ENCODE measurements at regions of chr5 and their contacts with region 1.

Region 1: GRCh38 chr5:180090098-180090768 is 18.7 kb upstream of the RNF130 start:
- DNase-seq: peak in 1 of 2 donors; percentile 36
- ATAC-seq: peak; percentile 68 to 79
- H3K4me3 ChIP-seq: peak overlapping the region; percentile 55 to 69 (median 62)
- H3K27ac ChIP-seq: peak overlapping the region; percentile 45 to 61 (median 57)
- H3K4me1 ChIP-seq: peaks cover 0 to 13% of the 10 kb centered on the region in 2 donors
- H3K27me3 ChIP-seq: no peaks in the 10 kb centered on the region
- CTCF ChIP-seq: peak; percentile 60 to 90 (median 78)
- POLR2A ChIP-seq: no peak

Region 2: DNA sequence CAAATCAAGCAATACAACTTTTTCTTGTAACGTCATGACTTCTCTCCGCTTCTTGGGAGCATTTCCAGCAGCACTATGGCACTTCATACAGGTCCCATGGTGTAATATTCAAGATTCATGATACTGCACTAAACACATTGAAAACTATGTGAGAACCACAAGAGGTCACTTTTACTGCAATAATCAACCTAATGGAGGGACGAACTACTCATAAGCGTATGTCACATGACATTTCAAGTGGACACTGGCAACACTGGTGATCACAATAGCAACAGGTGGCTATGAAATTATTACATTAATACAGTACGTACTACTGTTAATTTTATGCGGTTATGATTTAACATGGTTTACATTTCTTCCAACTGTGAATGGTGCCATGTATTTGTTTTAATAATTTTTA is 103.9 kb before region 1 on chr5:
- in situ Hi-C with region 1: loop called in 1 of 4 experiments (anchors 5 kb)
- intact Hi-C with region 1: loop called (anchors 5 kb)
- DNase-seq: no peak
- ATAC-seq: peak; percentile 82 to 90
- H3K4me3 ChIP-seq: no peak overlapping the region
- H3K27ac ChIP-seq: no peak overlapping the region
- H3K4me1 ChIP-seq: peaks cover 0 to 3% of the 10 kb centered on the region in 2 donors
- H3K27me3 ChIP-seq: no peaks in the 10 kb centered on the region
- CTCF ChIP-seq: no peak
- POLR2A ChIP-seq: no peak

Measured in gastrocnemius medialis (tissue), 4 donors.